K562 (cell line): ENCODE measurements at regions of chr9 and their contacts with region 1.

Region 1: GRCh38 chr9:123081824-123082223 is 48.4 kb downstream of the GPR21 start:
- DNase-seq: peak; percentile 32 to 56 (median 40)
- ATAC-seq: peak; percentile 85
- H3K4me3 ChIP-seq: no peak overlapping the region
- H3K27ac ChIP-seq: no peak overlapping the region
- H3K4me1 ChIP-seq: no peaks in the 10 kb centered on the region
- H3K27me3 ChIP-seq: no peaks in the 10 kb centered on the region
- CTCF ChIP-seq: peak; percentile 55 to 84 (median 67); a peak in 5 of 6 replicates
- EP300 ChIP-seq: no peak
- POLR2A ChIP-seq: no peak
- RAD21 ChIP-seq: peak; percentile 57 to 76

Region 2: GRCh38 chr9:123225374-123225813 is 143.6 kb after region 1 on chr9:
- CTCF ChIA-PET with region 1: no interaction called
- POLR2A ChIA-PET with region 1: no interaction called
- in situ Hi-C with region 1: no loop called
- intact Hi-C with region 1: loop called (anchors 10 kb)
- DNase-seq: peak in 2 of 4 experiments; percentile 36 to 41
- ATAC-seq: peak; percentile 84
- H3K4me3 ChIP-seq: no peak overlapping the region
- H3K27ac ChIP-seq: no peak overlapping the region
- H3K4me1 ChIP-seq: peaks cover 0 to 3% of the 10 kb centered on the region in 2 experiments; a peak in 2 of 5 replicates
- H3K27me3 ChIP-seq: no peaks in the 10 kb centered on the region
- CTCF ChIP-seq: peak; percentile 37 to 53 (median 51); a peak in 4 of 6 replicates
- EP300 ChIP-seq: no peak
- POLR2A ChIP-seq: no peak
- RAD21 ChIP-seq: peak in 1 of 2 experiments; percentile 43; a peak in 2 of 4 replicates